ENCODE measurements at regions of chr12 and their contacts with region 1.

Region 1: GRCh38 chr12:57590536-57591479 is at the start of gene PIP4K2C:
- DNase-seq: peak; percentile 73 to 83 (median 75)
- H3K4me3 ChIP-seq: peak within 1 kb of the TSS; percentile 54 to 87
- H3K4me3 Mint-ChIP-seq: peak within 1 kb of the TSS; percentile 86 to 92 (median 90)
- H3K27ac ChIP-seq: peak within 1 kb of the TSS; percentile 63
- H3K27ac Mint-ChIP-seq: peak within 1 kb of the TSS; percentile 73 to 96 (median 91)
- H3K4me1 ChIP-seq: peaks cover 27% of the 10 kb centered on the region
- H3K4me1 Mint-ChIP-seq: peaks cover 23 to 39% (median 30%) of the 10 kb centered on the region in 4 donors
- H3K27me3 ChIP-seq: no peaks in the 10 kb centered on the region
- H3K27me3 Mint-ChIP-seq: no peaks in the 10 kb centered on the region
- total RNA-seq, gene PIP4K2C: 32.4 to 36.0 TPM

Region 2: GRCh38 chr12:57546438-57547383 is 44.1 kb before region 1 on chr12 and contains the start of gene DCTN2:
- CTCF ChIA-PET with region 1: no interaction called
- POLR2A ChIA-PET with region 1: no interaction called
- intact Hi-C with region 1: loop called (anchors 2 kb)
- DNase-seq: peak; percentile 91 to 97 (median 93)
- H3K4me3 ChIP-seq: peak within 1 kb of the TSS; percentile 54 to 71
- H3K4me3 Mint-ChIP-seq: peak within 1 kb of the TSS; percentile 93 to 100 (median 98)
- H3K27ac ChIP-seq: peak within 1 kb of the TSS; percentile 84
- H3K27ac Mint-ChIP-seq: peak within 1 kb of the TSS; percentile 84 to 99 (median 97)
- H3K4me1 ChIP-seq: peaks cover 37% of the 10 kb centered on the region
- H3K4me1 Mint-ChIP-seq: peaks cover 32 to 53% (median 42%) of the 10 kb centered on the region in 4 donors
- H3K27me3 ChIP-seq: no peaks in the 10 kb centered on the region
- H3K27me3 Mint-ChIP-seq: peaks cover 2 to 4% of the 10 kb centered on the region in 2 donors
- total RNA-seq, gene DCTN2: 69.4 to 70.7 TPM

Region 3: GRCh38 chr12:57611108-57611809 is 20.5 kb after region 1 on chr12 and contains the start of gene ARHGEF25:
- CTCF ChIA-PET with region 1: interaction called, 36 read pairs
- POLR2A ChIA-PET with region 1: interaction called, 3 read pairs
- intact Hi-C with region 1: loop called (anchors 2 kb)
- DNase-seq: no peak
- H3K4me3 ChIP-seq: peak within 1 kb of the TSS; percentile 23 to 57
- H3K4me3 Mint-ChIP-seq: peak within 1 kb of the TSS; percentile 74 to 89 (median 80)
- H3K27ac ChIP-seq: no peak within 1 kb of the TSS
- H3K27ac Mint-ChIP-seq: peak within 1 kb of the TSS in 4 of 7 donors; percentile 15 to 78 (median 57)
- H3K4me1 ChIP-seq: peaks cover 9% of the 10 kb centered on the region
- H3K4me1 Mint-ChIP-seq: peaks cover 3 to 17% (median 9%) of the 10 kb centered on the region in 4 donors
- H3K27me3 ChIP-seq: peaks cover 10% of the 10 kb centered on the region
- H3K27me3 Mint-ChIP-seq: peaks cover 3 to 21% of the 10 kb centered on the region in 2 donors
- total RNA-seq, gene ARHGEF25: 0.47 to 0.67 TPM

Region 4: DNA sequence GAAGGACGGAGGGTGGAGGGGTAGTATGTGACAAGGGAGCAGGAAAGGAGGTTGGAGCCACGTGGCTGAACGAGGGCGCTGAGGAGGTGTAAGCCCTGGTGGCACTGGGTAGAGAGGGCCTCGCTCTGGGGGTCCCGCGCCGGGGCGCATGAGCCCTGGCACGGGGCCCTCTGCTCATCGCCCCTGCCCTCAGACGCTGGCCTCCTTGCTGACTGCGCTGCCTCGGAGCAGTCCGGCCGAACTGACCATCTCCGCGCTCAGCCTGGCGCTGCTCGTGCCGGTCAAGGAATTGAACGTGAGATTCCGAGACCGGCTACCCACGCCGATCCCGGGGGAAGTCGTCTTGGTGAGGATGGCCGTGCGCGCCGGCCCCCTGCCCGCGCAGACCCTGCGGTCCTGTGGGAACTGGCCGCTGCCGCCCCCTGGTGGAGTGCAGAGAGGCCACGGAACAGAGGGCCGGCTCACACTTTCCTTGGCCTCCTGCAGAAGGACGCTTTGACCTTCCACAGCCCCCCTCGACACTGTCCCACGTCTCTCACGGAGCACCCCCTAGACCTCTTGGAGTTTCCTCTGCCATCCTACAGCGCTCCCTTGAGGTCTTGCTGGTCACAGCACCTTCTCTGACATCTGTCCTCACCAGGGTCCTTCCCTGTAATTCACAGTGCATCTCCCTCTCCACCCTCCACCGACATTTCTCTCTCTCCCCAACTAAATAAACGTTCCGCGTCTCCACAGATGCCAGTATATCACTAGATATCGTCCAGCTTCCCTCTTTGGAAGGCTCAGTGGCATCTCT is 30.9 kb after region 1 on chr12:
- CTCF ChIA-PET with region 1: interaction called, 124 read pairs
- POLR2A ChIA-PET with region 1: interaction called, 3 read pairs
- intact Hi-C with region 1: loop called (anchors 2 kb)
- DNase-seq: peak; percentile 34 to 57 (median 39)
- H3K4me3 ChIP-seq: peak overlapping the region in 1 of 2 donors; percentile 23
- H3K4me3 Mint-ChIP-seq: peak overlapping the region; percentile 63 to 90 (median 76)
- H3K27ac ChIP-seq: no peak overlapping the region
- H3K27ac Mint-ChIP-seq: peak overlapping the region in 2 of 7 donors; percentile 23 to 77
- H3K4me1 ChIP-seq: peaks cover 29% of the 10 kb centered on the region
- H3K4me1 Mint-ChIP-seq: peaks cover 24 to 36% (median 28%) of the 10 kb centered on the region in 4 donors
- H3K27me3 ChIP-seq: peaks cover 79% of the 10 kb centered on the region
- H3K27me3 Mint-ChIP-seq: peaks cover 82 to 87% of the 10 kb centered on the region in 2 donors